Activated naive CD4-positive, alpha-beta T cell treated with anti-CD3 and anti-CD28 coated beads for 36 hours (primary cell): ENCODE measurements at regions of chr1 and their contacts with region 1.

Region 1: DNA sequence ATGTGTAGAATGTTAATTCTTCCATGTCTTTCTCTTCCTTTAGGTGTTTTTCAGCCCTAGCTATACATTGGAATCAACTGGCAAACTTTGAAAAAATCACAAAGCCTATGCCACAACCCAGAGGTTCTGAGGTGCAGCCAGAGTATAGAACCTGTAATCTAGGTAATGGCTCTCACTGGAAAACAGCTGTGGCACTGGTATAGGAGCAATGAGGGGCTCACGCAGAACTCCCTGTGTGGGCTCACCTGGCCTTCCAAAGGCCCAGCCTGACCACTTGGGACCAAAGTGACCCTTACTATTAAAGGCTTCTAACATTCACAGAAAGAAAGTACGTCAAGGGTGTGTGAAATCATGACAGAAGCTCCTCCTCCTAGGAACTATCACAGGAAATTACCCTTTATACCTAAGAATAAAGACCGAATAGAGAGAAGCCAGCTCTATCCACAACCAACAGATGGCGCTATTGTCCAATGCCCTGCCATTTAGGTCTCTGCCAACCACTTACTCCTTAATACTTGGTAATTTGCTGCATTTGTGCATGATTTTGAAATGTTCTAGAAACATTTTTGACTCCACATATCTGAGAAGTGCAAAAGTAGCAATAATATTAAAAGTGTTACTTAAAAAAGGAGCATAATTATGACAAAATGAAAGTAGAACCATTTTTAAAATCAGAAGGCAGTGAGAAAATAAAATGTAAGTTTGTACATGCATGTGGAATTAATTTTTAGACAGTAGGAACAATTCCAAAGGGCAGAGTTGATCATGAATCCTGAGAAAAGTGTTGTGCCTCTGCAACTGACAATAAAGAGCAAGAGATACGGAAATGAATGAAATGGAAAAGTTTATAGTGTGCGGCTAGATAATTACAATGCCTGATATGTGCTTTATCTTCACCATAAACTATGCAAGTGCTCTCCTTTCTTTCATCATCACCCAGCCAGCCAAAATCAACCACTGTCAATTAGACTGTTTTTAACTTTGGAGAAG is 93.1 kb upstream of the HAO2 start:
- DNase-seq: peak; percentile 70
- H3K4me3 Mint-ChIP-seq: no peak overlapping the region
- H3K27ac Mint-ChIP-seq: no peak overlapping the region
- H3K4me1 Mint-ChIP-seq: no peaks in the 10 kb centered on the region
- H3K27me3 Mint-ChIP-seq: no peaks in the 10 kb centered on the region

Region 2: GRCh38 chr1:118151312-118151937 is 1124.0 kb before region 1 on chr1:
- CTCF ChIA-PET with region 1: no interaction called
- intact Hi-C with region 1: loop called (anchors 2 kb)
- DNase-seq: peak; percentile 60
- H3K4me3 Mint-ChIP-seq: no peak overlapping the region
- H3K27ac Mint-ChIP-seq: no peak overlapping the region
- H3K4me1 Mint-ChIP-seq: no peaks in the 10 kb centered on the region
- H3K27me3 Mint-ChIP-seq: peaks cover 6% of the 10 kb centered on the region

Region 3: GRCh38 chr1:118335331-118335732 is 940.1 kb before region 1 on chr1:
- CTCF ChIA-PET with region 1: no interaction called
- intact Hi-C with region 1: no loop called
- DNase-seq: no peak
- H3K4me3 Mint-ChIP-seq: no peak overlapping the region
- H3K27ac Mint-ChIP-seq: no peak overlapping the region
- H3K4me1 Mint-ChIP-seq: no peaks in the 10 kb centered on the region
- H3K27me3 Mint-ChIP-seq: no peaks in the 10 kb centered on the region

Region 4: DNA sequence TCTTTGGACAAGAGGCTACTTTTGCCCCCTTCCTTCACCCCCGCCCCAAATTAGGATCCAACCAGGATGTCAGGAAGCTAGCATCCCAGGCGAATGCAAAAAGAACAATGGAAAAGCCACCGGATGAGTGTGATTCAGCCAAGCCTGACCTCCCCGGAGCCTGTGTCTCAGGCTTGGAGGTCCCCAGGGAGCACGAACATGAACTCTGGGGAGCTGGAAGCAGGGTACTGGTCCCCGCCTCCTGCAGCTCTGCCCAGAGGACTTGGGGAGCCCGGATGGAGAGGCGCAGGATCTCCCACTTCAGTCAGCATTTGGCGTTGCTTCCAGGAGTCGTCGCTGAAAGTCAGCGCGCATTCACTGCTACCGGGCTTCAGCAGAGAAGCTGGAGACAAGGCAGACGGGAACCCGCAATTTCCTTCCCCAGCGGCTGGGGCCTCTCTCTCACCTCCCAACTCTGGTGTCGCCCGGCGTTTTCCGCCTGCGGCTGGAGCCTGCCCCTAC is 285.5 kb before region 1 on chr1:
- CTCF ChIA-PET with region 1: no interaction called
- intact Hi-C with region 1: no loop called
- DNase-seq: no peak
- H3K4me3 Mint-ChIP-seq: no peak overlapping the region
- H3K27ac Mint-ChIP-seq: no peak overlapping the region
- H3K4me1 Mint-ChIP-seq: peaks cover 28% of the 10 kb centered on the region
- H3K27me3 Mint-ChIP-seq: peaks cover 89% of the 10 kb centered on the region

Region 5: DNA sequence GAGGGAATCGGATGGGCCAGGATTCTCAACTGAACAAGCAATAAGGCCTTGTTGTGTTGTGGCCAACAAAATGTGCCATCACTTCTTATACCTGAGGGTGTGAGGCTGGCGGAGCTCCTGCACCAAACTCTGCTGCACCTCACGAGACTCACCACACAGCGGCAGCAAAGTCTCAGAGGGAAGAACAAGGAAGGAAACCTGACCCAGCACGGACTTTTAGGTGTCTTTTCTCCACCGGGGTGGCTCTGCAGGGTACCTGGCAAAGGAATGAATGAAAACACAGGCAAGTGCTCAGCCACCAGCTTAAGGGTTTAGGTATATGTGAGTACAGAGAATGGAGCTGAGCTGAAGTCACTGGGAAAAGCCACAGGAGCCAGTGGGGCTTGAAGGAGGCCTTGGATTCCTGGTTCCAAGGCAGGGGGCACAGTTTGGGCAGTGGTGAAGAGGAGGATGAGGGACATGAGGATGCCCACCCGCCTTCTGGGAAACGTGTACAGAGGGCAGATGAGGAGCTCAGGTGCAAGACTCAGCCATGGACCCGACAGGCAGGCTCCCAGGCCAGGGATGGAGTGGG is 200.5 kb after region 1 on chr1:
- CTCF ChIA-PET with region 1: no interaction called
- intact Hi-C with region 1: loop called (anchors 5 kb)
- DNase-seq: peak; percentile 61
- H3K4me3 Mint-ChIP-seq: no peak overlapping the region
- H3K27ac Mint-ChIP-seq: no peak overlapping the region
- H3K4me1 Mint-ChIP-seq: no peaks in the 10 kb centered on the region
- H3K27me3 Mint-ChIP-seq: peaks cover 4% of the 10 kb centered on the region